ENCODE measurements at regions of chr18 and their contacts with region 1.

Region 1: GRCh38 chr18:80171054-80171872 is 62.2 kb downstream of the ADNP2 start:
- DNase-seq: peak; percentile 71
- H3K4me3 Mint-ChIP-seq: no peak overlapping the region
- H3K27ac Mint-ChIP-seq: no peak overlapping the region
- H3K4me1 Mint-ChIP-seq: peaks cover 16% of the 10 kb centered on the region
- H3K27me3 Mint-ChIP-seq: peaks cover 36% of the 10 kb centered on the region

Region 2: DNA sequence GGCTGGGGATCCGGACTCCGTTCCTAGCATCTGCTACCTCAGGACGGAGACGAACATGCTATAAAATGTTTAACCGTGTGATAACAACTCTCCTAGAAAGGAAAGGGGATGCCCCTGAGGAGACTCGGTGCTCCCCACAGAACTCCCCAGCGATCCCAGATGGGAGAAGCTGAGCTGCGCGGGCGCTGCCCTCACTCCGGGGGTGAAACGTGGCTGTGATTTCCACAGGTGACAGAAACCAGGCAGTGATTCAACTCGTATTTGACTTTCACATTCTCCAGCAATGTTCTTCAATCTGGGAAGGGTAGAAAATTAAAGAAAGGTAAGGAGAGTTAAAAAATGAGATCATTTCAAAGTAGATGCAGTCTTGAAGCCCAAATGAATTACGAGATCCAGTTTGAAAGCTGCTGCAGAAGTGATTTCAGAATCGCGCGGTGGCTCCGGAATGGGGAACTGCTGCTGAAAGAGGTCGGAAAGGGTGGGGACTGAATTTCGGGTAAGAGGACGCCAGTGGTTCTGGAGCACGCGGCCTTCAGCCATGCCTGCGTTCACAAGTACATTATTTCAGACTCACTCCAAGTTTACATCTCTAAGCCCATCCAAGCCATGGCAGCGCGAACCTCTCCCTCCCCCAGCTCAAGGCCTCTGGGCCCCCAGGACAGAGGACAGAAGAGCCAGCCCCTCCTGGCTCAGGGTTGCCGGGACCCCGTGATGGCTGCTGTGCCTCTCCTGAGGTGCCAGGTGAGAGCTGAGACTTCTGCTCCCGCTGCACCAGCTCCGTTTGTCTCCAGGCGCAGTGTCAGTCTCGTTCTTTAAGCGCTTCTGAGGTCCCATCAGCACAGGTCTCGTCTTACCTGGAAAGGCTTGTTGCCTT is 22.7 kb before region 1 on chr18:
- CTCF ChIA-PET with region 1: no interaction called
- POLR2A ChIA-PET with region 1: no interaction called
- intact Hi-C with region 1: no loop called
- DNase-seq: no peak
- H3K4me3 Mint-ChIP-seq: peak overlapping the region; percentile 82
- H3K27ac Mint-ChIP-seq: no peak overlapping the region
- H3K4me1 Mint-ChIP-seq: peaks cover 7% of the 10 kb centered on the region
- H3K27me3 Mint-ChIP-seq: peaks cover 22% of the 10 kb centered on the region

Region 3: GRCh38 chr18:80253871-80254492 is 82.7 kb after region 1 on chr18:
- CTCF ChIA-PET with region 1: interaction called, 45 read pairs
- POLR2A ChIA-PET with region 1: no interaction called
- intact Hi-C with region 1: no loop called
- DNase-seq: peak; percentile 34
- H3K4me3 Mint-ChIP-seq: no peak overlapping the region
- H3K27ac Mint-ChIP-seq: no peak overlapping the region
- H3K4me1 Mint-ChIP-seq: no peaks in the 10 kb centered on the region
- H3K27me3 Mint-ChIP-seq: peaks cover 7% of the 10 kb centered on the region

Measured in activated CD4-positive, alpha-beta memory T cell treated with anti-CD3 and anti-CD28 coated beads for 36 hours (primary cell).